Posterior vena cava (tissue), 2 donors: ENCODE measurements at regions of chr5 and their contacts with region 1.

Region 1: DNA sequence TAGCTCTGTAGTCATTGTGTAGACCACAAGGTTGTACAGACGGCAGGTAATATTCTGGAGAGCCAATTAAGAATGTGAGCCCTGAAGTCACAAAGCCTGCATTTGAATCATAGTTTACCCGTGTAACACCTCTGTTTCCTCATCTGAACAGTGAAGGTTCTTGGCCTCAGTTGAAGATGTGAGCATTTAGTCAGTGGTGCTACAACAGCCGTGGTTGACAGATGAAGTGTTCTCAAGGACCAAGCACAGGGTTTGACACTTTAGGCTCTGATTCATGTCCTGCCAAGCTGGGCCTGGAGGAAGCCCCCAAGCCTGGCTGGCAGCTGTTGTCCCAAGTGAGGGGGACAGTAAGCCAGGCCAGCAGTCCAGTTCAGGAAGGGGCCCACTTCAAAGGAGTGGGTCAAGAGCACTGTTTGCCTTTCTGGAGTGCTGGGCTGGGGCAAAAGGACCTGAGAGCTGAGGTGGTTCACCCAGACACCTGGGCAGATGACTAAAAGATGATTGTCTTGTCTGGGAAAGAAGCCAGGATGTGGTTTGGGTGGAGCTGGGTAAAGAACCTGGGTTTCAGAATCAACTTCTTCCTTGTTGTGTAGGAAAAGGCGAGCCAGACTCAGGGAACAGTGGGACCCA is 20.7 kb downstream of the FAXDC2 start:
- DNase-seq: no peak

Region 2: GRCh38 chr5:155114655-155115054 is 285.0 kb after region 1 on chr5:
- intact Hi-C with region 1: no loop called
- DNase-seq: no peak

Region 3: DNA sequence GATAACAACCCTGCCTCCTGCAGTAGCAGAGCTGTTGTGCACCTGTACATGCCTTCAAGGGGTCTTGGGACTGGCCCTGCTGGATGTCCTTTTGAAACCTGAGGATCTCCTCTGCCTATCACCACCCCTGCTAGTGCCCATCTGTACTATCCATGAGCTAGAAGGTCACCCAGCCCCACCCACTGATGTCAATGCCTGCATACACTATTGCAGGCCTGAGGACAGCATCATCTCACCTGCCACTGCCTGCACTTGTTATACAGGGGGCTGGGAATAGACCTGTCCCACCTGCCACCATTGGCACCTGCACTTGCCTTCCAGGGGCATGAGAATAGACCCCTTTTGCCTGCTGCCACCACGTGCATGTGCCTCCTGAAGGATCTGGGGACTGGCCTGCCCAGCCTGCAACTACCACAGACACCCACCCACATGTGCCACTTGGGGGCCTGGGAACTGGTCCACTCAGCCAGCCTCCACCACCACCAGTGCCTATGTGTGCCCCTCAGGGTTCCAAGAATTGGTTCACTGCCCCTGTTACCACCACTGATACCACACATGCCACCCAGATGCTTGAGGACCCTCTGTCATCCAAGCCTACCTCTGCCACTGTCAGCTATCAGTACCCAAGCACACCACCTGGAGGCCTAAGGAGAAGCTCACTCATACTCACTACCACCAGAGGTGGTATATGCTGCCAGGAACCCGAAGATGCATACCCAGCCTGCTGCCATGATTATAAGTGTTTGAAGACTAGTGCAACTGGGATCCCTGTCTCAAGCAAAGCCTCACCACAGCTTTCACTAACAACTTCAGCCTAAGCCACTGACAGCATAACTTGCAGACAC is 1656.9 kb after region 1 on chr5:
- intact Hi-C with region 1: loop called in 1 of 2 experiments (anchors 5 kb)
- DNase-seq: no peak